ENCODE measurements at regions of chr11 and their contacts with region 1.

Region 1: GRCh38 chr11:130448416-130449309 is at the start of gene ADAMTS15:
- DNase-seq: peak; percentile 87 to 96 (median 93)
- ATAC-seq: peak; percentile 76 to 87 (median 80)
- H3K4me3 ChIP-seq: peak within 1 kb of the TSS; percentile 63 to 88 (median 80)
- H3K27ac ChIP-seq: peak within 1 kb of the TSS; percentile 70 to 91 (median 80)
- H3K4me1 ChIP-seq: peaks cover 0 to 57% (median 41%) of the 10 kb centered on the region in 12 donors
- H3K27me3 ChIP-seq: peaks cover 0 to 21% (median 0%) of the 10 kb centered on the region in 9 donors
- CTCF ChIP-seq: peak in 1 of 12 donors; percentile 5
- POLR2A ChIP-seq: peak in 1 of 2 donors; percentile 72
- total RNA-seq, gene ADAMTS15: 5.3 to 36.5 (median 16.7) TPM

Region 2: DNA sequence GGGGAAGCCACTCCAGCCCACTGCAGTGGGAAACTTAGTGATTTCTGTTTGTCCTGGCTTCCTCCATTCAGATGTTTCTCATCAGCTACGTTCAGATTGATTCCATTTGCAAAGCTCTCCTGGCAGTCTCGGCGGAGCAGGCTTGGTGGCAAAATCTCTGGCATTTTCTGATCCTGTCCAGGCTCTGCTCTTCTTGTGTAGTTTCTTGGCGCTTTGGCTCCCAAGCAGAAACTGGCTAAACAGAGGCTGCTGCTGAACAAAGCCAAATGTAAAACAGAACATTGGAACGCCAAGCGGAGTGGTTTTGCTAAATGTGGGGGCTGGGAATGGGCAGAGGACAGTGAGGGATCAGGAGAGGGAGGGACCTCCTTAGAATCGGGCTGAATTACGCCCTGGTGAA is 57.0 kb before region 1 on chr11:
- intact Hi-C with region 1: no loop called
- DNase-seq: no peak
- ATAC-seq: no peak
- H3K4me3 ChIP-seq: no peak overlapping the region
- H3K27ac ChIP-seq: peak overlapping the region in 1 of 12 donors; percentile 60
- H3K4me1 ChIP-seq: peaks cover 0 to 14% (median 9%) of the 10 kb centered on the region in 12 donors
- H3K27me3 ChIP-seq: no peaks in the 10 kb centered on the region
- CTCF ChIP-seq: no peak
- POLR2A ChIP-seq: no peak

Region 3: GRCh38 chr11:130522284-130522961 is 73.8 kb after region 1 on chr11:
- intact Hi-C with region 1: loop called in 7 of 10 experiments (anchors 2 to 5 kb)
- DNase-seq: peak; percentile 91 to 97 (median 93)
- ATAC-seq: peak; percentile 94 to 98 (median 96)
- H3K4me3 ChIP-seq: no peak overlapping the region
- H3K27ac ChIP-seq: peak overlapping the region; percentile 76 to 95 (median 84)
- H3K4me1 ChIP-seq: peaks cover 0 to 51% (median 32%) of the 10 kb centered on the region in 12 donors
- H3K27me3 ChIP-seq: no peaks in the 10 kb centered on the region
- CTCF ChIP-seq: no peak
- POLR2A ChIP-seq: peak in 1 of 2 donors; percentile 64

Region 4: DNA sequence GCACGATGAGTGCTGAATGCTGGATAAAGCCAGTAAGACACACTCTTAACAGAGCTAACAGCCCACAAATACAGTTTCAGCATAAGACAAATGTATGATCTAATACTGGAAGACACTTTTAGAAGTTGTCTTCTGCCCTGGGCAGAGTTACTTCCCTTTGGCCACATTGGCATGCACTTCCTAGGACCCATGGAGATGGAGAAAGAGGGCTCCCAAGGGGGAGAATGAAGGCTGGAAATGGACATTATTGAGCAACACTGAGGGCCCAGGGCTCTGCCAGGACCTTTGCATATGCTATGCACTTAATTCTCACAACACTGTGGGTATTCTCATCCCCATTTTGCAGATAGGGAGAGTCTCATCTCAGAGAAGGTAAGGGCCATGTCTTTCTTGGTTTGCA is 122.9 kb after region 1 on chr11:
- intact Hi-C with region 1: no loop called
- DNase-seq: no peak
- ATAC-seq: no peak
- H3K4me3 ChIP-seq: no peak overlapping the region
- H3K27ac ChIP-seq: no peak overlapping the region
- H3K4me1 ChIP-seq: peaks cover 0 to 6% (median 0%) of the 10 kb centered on the region in 12 donors
- H3K27me3 ChIP-seq: no peaks in the 10 kb centered on the region
- CTCF ChIP-seq: no peak
- POLR2A ChIP-seq: no peak

Region 5: GRCh38 chr11:130653838-130654636 is 205.4 kb after region 1 on chr11:
- intact Hi-C with region 1: loop called in 6 of 10 experiments (anchors 1 to 10 kb)
- DNase-seq: peak; percentile 82 to 94 (median 84)
- ATAC-seq: peak; percentile 98
- H3K4me3 ChIP-seq: no peak overlapping the region
- H3K27ac ChIP-seq: peak overlapping the region; percentile 44 to 87 (median 72)
- H3K4me1 ChIP-seq: peaks cover 2 to 61% (median 30%) of the 10 kb centered on the region in 12 donors
- H3K27me3 ChIP-seq: no peaks in the 10 kb centered on the region
- CTCF ChIP-seq: no peak
- POLR2A ChIP-seq: no peak

Region 6: DNA sequence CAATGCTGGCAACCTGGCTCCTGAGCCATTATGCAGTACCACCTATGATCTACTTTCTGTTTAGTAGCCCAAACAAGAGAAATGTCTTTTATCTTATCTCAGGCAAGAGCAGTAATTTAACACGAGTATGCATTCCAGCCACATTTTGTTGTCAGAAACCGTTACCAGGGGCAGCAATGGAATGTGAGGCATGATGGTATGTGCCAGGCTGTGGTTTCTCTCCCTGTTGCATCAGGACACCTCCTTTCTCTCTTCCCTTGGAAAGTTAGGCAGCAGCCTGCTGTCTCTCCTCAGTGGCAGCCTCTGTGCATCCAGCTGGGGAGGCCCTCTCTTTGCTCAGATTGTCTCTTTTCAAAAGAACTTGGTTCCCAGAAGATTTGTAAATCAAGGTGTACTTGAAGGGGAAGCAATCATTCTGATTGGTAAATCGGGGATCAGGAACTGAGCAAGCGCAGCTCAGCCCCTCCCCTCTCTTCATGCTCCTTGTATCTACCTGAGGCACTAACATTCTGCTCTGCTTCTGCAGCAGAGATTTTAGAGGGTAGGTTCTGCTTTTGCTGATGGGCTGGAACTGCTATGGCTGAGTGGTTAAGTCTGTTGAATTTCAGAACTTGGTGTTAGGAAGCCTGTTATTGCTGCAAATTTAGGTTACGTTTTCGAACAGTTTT is 229.0 kb after region 1 on chr11:
- intact Hi-C with region 1: loop called in 4 of 10 experiments (anchors 1 to 10 kb)
- DNase-seq: peak in 4 of 5 donors; percentile 24 to 43 (median 41)
- ATAC-seq: peak; percentile 39 to 83 (median 58)
- H3K4me3 ChIP-seq: peak overlapping the region in 1 of 12 donors; percentile 10
- H3K27ac ChIP-seq: peak overlapping the region; percentile 74 to 87 (median 79)
- H3K4me1 ChIP-seq: peaks cover 0 to 46% (median 31%) of the 10 kb centered on the region in 12 donors
- H3K27me3 ChIP-seq: no peaks in the 10 kb centered on the region
- CTCF ChIP-seq: no peak
- POLR2A ChIP-seq: no peak

Region 7: DNA sequence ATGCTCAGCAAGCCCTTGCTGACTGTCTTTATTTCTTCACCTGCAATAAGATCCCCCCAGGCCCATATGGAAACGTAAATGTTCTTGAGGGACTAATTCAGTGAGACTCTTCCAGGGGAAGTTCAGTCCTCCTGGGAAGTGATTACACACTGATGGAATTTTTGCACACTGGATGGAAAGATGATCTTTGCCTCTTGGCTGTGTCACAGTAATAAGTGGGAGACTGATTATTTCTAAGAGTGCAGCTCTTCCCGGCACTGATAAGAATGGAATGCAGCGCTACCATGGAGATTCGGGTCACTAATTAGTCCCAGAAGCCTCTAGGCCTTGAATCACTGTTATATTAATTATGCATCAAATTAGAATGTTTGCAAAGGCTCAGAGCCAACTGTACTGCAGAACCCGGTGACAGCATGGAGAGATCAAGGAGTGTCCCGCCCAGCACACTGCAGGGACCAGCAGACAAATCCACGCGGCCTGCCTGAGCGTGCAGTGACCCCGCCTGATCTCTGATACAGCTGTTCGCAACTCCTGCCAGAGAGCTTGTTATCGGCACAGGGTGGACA is 289.3 kb after region 1 on chr11:
- intact Hi-C with region 1: loop called in 2 of 10 experiments (anchors 5 to 10 kb)
- DNase-seq: peak; percentile 79 to 89 (median 84)
- ATAC-seq: peak; percentile 93 to 98 (median 96)
- H3K4me3 ChIP-seq: peak overlapping the region in 3 of 12 donors; percentile 1 to 12 (median 5)
- H3K27ac ChIP-seq: peak overlapping the region in 10 of 12 donors; percentile 7 to 74 (median 54)
- H3K4me1 ChIP-seq: peaks cover 3 to 24% (median 18%) of the 10 kb centered on the region in 12 donors
- H3K27me3 ChIP-seq: no peaks in the 10 kb centered on the region
- CTCF ChIP-seq: no peak
- POLR2A ChIP-seq: no peak

Region 8: DNA sequence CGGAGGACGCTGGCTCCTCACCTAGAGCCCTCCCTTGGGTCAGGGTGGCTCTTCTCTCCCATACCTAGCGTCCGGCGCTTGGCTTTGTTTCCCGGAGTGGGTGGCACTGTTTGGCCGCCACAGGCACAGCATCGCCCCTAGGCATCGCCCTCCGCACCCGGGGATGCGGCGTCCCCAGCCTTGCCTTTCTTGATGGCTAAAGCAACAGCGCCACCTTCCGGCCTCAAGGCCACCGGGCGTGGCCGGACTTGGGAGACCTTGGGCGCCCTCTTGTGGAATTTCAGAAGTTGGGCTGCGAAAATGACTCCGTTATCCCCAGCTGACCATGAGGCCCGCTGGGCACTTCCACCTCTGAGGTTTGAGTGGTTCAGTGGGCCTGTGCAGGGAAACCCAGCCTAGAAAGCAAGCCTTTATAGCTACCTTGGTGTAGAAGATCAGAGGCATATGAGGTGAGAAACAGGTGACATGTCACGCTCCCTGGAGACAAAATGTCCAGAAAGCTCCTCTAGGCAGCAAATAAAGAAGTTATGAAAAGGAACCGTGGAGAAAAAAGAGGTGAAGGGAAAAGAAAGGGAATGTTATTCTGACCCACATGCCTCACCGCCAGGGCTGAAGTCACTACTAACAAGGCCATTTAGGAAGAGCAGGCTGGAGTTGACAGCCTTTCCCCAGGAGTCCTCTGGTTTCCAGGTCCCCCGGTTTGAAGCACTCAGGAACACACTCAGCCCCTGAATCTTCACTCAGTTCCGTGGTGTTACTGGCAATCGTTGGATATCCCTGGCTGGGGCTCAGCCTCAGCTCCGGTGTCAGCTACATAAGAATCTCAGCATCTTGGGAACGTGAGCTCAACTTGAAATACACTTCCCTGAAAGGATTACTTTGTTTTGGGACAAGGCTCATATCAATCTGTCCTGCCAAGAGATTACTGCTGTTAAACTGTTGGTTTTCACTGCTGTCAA is 413.5 kb after region 1 on chr11:
- intact Hi-C with region 1: loop called in 1 of 10 experiments (anchors 5 kb)
- DNase-seq: peak; percentile 87 to 95 (median 90)
- ATAC-seq: peak; percentile 38 to 72 (median 58)
- H3K4me3 ChIP-seq: peak overlapping the region in 1 of 12 donors; percentile 2
- H3K27ac ChIP-seq: peak overlapping the region in 1 of 12 donors; percentile 28
- H3K4me1 ChIP-seq: peaks cover 0 to 37% (median 15%) of the 10 kb centered on the region in 12 donors
- H3K27me3 ChIP-seq: no peaks in the 10 kb centered on the region
- CTCF ChIP-seq: peak; percentile 99 to 100 (median 100)
- POLR2A ChIP-seq: no peak